GM18951 (cell line): ENCODE measurements at regions of chr3 and their contacts with region 1.

Region 1: DNA sequence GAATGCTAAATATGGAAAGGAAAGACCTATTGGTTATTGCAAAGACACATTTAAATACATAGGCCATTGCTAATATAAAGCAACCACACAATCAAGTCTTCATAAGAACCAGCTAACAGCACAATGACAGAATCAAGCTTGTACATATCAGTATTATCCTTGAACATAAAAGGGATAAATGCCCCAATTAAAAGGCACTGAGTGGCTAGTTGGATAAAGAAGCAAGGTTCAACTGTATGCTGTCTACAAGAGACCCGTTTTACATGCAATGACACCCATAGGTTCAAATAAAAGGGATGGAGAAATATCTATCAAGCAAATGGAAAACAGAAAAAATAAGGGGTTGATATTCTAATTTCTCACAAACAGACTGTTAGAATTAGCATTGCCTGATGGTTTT is 706.1 kb downstream of the EPHA3 start:
- POLR2A ChIP-seq: no peak

Region 2: GRCh38 chr3:89859757-89860156 is 46.3 kb after region 1 on chr3:
- in situ Hi-C with region 1: loop called (anchors 10 kb)
- POLR2A ChIP-seq: no peak